PC-9 (cell line): ENCODE measurements at regions of chr20 and their contacts with region 1.

Region 1: DNA sequence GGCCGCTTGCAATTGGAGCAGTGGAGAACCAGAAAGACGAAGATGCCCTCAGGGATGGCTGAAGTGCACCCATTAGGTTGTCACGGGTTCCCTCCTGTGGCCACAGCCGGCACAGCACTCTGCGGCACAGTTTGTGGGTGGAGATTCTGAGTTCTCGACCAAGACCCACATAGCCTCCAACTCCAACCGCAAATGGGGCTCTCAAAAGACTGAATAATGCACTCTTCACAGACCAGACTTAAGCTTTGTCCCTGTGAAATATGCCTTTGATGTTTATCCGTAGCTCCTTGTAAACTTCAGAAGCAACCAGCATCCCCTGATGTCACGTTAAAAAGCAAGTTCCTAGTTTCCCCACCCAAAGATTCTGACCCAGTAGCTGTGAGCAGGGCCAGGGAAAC is 934 bp upstream of the CST9 start:
- DNase-seq: peak; percentile 67 to 78
- H3K4me3 ChIP-seq: no peak overlapping the region
- H3K27ac ChIP-seq: no peak overlapping the region
- H3K4me1 ChIP-seq: no peaks in the 10 kb centered on the region
- H3K27me3 ChIP-seq: no peaks in the 10 kb centered on the region; the same call in 1 of the 2 replicates
- CTCF ChIP-seq: peak; percentile 92

Region 2: GRCh38 chr20:23255716-23256385 is 350.8 kb before region 1 on chr20:
- CTCF ChIA-PET with region 1: no interaction called
- POLR2A ChIA-PET with region 1: no interaction called
- intact Hi-C with region 1: no loop called
- DNase-seq: no peak
- H3K4me3 ChIP-seq: no peak overlapping the region
- H3K27ac ChIP-seq: no peak overlapping the region
- H3K4me1 ChIP-seq: peaks cover 7% of the 10 kb centered on the region
- H3K27me3 ChIP-seq: peaks cover 20% of the 10 kb centered on the region; the same call in 1 of the 2 replicates
- CTCF ChIP-seq: no peak

Region 3: GRCh38 chr20:23441850-23442313 is 164.8 kb before region 1 on chr20:
- CTCF ChIA-PET with region 1: interaction called, 3 read pairs
- POLR2A ChIA-PET with region 1: no interaction called
- intact Hi-C with region 1: loop called (anchors 1 kb)
- DNase-seq: peak; percentile 62
- H3K4me3 ChIP-seq: no peak overlapping the region
- H3K27ac ChIP-seq: no peak overlapping the region
- H3K4me1 ChIP-seq: peaks cover 5% of the 10 kb centered on the region; the same call in 1 of the 2 replicates
- H3K27me3 ChIP-seq: no peaks in the 10 kb centered on the region
- CTCF ChIP-seq: peak; percentile 89

Region 4: DNA sequence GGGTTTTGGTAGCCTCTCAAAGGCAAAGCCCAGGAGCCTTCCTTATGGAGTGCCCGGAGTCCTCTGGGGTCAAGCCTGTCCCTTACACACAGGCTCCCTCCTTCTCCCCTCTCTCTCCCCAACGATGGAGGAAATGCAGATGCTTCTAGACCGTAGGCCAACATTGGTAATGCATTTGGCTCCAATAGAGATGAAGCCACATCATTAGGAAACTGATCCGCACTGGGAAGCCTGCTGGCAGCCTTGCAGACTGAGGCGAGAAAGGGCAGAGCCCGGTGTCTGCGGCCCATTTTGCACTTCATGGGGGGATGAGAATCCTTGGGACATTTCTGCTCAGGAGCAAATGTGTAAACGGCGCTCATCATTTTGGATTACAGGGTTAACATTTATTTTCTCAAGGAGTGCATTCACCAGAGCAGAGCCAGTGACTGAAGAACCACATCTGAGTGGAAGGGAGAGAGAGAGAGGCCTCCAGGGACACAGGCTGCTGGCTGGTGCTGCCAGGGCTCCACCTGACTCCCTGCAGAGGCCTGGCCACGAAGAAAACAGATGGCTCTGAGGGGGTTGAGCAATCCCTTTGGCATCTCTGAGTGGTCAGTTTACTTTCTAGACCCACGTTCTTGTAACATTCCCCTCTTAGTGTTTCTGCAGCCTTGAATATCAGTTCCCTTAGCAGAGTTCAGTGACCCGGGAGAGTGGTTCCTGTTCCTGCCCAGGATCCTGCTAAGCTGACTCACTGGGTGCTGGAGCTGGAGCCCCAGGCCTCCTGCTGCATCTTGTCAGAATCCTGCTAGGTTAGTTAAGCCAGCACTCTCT is 35.5 kb after region 1 on chr20:
- CTCF ChIA-PET with region 1: no interaction called
- POLR2A ChIA-PET with region 1: no interaction called
- intact Hi-C with region 1: loop called (anchors 5 kb)
- DNase-seq: peak; percentile 64 to 97
- H3K4me3 ChIP-seq: no peak overlapping the region
- H3K27ac ChIP-seq: peak overlapping the region; percentile 78
- H3K4me1 ChIP-seq: peaks cover 66% of the 10 kb centered on the region
- H3K27me3 ChIP-seq: no peaks in the 10 kb centered on the region
- CTCF ChIP-seq: no peak

Region 5: DNA sequence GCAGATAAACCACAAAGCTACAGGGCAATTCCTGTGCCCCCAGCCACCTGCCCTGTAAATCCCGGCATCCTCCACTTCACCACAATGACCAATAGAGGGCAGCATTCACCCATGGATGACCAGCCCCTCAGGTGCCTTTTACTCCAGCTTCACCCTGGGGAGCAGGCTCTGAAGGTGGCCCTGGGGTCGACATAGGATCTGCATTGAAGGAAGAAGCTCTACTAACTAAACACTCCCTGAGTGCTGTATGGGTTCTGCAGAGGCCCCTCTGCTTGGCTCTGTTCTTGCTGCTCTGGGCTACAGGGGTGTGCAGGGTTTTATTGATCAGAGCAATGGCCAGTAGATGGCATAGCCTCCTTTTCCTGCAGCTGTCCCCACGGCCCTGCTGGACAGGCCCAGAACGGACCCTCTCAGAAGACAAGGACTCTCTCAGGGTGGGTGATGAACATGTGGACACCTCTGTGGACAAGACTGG is 61.9 kb after region 1 on chr20:
- CTCF ChIA-PET with region 1: no interaction called
- POLR2A ChIA-PET with region 1: no interaction called
- intact Hi-C with region 1: loop called (anchors 1 kb)
- DNase-seq: peak; percentile 59 to 66
- H3K4me3 ChIP-seq: no peak overlapping the region
- H3K27ac ChIP-seq: no peak overlapping the region
- H3K4me1 ChIP-seq: peaks cover 6% of the 10 kb centered on the region
- H3K27me3 ChIP-seq: no peaks in the 10 kb centered on the region
- CTCF ChIP-seq: peak; percentile 96